A673 (cell line): ENCODE measurements at regions of chr5 and their contacts with region 1.

Region 1: GRCh38 chr5:167244583-167244982 is 1046.9 kb upstream of the WWC1 start:
- DNase-seq: peak; percentile 68
- H3K4me3 ChIP-seq: no peak overlapping the region
- H3K27ac ChIP-seq: no peak overlapping the region
- H3K4me1 ChIP-seq: peaks cover 3% of the 10 kb centered on the region
- H3K27me3 ChIP-seq: no peaks in the 10 kb centered on the region
- CTCF ChIP-seq: peak; percentile 66

Region 2: GRCh38 chr5:165630261-165630778 is 1614.3 kb before region 1 on chr5:
- CTCF ChIA-PET with region 1: no interaction called
- POLR2A ChIA-PET with region 1: no interaction called
- intact Hi-C with region 1: loop called (anchors 5 kb)
- DNase-seq: peak; percentile 59
- H3K4me3 ChIP-seq: no peak overlapping the region
- H3K27ac ChIP-seq: no peak overlapping the region
- H3K4me1 ChIP-seq: no peaks in the 10 kb centered on the region
- H3K27me3 ChIP-seq: no peaks in the 10 kb centered on the region
- CTCF ChIP-seq: peak; percentile 75

Region 3: DNA sequence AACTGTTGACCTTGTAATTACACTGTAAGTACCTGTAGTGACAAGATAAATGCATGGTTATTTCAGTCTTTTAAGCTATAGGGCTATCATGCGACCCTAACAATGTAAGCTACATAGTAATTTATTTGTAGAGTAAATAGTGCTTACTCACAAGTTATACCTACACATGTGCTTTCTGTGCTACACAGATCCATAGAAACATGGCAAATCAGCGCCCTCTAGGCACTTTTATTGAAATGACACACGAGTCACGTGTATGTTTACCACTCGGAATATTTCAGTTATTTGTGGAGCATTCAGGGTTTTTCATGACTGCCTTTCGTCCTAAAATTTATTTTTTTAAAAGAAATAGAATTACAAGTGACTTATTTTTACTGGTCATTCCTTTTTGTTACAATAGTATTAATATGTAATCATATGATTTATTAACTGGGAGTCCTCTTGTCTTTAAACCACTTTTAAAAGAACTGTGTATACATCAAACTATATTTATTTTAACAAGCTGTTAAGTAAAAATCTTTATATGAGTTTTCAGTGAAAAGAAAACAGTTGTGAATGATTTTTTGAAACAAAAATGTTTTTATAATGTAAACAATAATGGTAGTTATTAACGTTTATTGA is 195.4 kb before region 1 on chr5:
- CTCF ChIA-PET with region 1: no interaction called
- POLR2A ChIA-PET with region 1: no interaction called
- intact Hi-C with region 1: loop called (anchors 10 kb)
- DNase-seq: peak; percentile 71
- H3K4me3 ChIP-seq: no peak overlapping the region
- H3K27ac ChIP-seq: no peak overlapping the region
- H3K4me1 ChIP-seq: no peaks in the 10 kb centered on the region
- H3K27me3 ChIP-seq: no peaks in the 10 kb centered on the region
- CTCF ChIP-seq: peak; percentile 68

Region 4: DNA sequence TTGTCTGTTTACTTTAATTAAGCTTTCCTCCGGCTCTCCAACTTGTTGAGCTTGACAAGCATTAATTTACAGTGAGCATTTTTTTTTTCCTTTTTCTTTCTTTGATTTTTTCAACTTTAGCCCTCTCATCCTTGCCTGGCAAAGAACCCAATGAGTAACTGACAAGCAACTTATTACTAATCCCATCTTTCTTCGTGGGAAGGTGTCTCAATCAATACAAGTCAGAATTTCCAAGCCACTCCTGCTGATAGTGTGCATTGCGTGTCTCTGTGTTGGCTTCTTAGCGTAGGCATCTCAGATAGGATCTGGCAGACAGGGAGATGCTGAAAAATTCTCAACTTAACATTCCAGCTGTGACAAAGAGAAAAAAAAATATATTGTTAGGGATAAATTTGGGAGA is 519.2 kb after region 1 on chr5:
- CTCF ChIA-PET with region 1: no interaction called
- POLR2A ChIA-PET with region 1: no interaction called
- intact Hi-C with region 1: no loop called
- DNase-seq: no peak
- H3K4me3 ChIP-seq: no peak overlapping the region
- H3K27ac ChIP-seq: peak overlapping the region; percentile 73
- H3K4me1 ChIP-seq: peaks cover 58% of the 10 kb centered on the region
- H3K27me3 ChIP-seq: no peaks in the 10 kb centered on the region
- CTCF ChIP-seq: no peak